ENCODE measurements at regions of chr7 and their contacts with region 1.

Region 1: GRCh38 chr7:144513334-144513733 is 109.8 kb upstream of the NOBOX start:
- DNase-seq: peak; percentile 40
- ATAC-seq: peak; percentile 89
- H3K4me3 ChIP-seq: no peak overlapping the region
- H3K27ac ChIP-seq: no peak overlapping the region
- H3K4me1 ChIP-seq: no peaks in the 10 kb centered on the region
- H3K27me3 ChIP-seq: peaks cover 7% of the 10 kb centered on the region; the same call in 1 of the 2 replicates
- CTCF ChIP-seq: peak; percentile 58; the same call in 1 of the 2 replicates

Region 2: DNA sequence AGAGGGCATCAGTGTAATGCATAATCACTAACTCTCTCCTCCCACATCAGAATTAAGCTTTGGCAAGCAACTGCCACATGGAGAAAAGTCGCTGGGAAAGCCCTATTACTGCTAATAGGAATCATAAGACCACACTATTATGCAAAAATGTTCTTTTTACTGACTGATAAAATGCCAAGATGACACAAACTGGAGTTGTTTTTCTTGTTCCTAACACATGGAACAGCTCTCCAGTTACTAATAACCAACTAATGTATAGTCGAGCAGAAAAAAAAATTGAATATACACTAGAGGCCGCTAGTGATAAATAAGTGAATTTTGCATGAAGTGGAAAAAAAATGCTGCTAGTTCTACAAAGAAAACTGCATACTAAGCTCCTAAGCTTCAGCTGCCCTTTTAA is 156.9 kb after region 1 on chr7:
- CTCF ChIA-PET with region 1: no interaction called
- POLR2A ChIA-PET with region 1: no interaction called
- intact Hi-C with region 1: loop called (anchors 1 kb)
- DNase-seq: peak; percentile 48
- ATAC-seq: peak; percentile 57
- H3K4me3 ChIP-seq: no peak overlapping the region
- H3K27ac ChIP-seq: no peak overlapping the region
- H3K4me1 ChIP-seq: no peaks in the 10 kb centered on the region
- H3K27me3 ChIP-seq: no peaks in the 10 kb centered on the region
- CTCF ChIP-seq: peak; percentile 62; the same call in 1 of the 2 replicates

Region 3: DNA sequence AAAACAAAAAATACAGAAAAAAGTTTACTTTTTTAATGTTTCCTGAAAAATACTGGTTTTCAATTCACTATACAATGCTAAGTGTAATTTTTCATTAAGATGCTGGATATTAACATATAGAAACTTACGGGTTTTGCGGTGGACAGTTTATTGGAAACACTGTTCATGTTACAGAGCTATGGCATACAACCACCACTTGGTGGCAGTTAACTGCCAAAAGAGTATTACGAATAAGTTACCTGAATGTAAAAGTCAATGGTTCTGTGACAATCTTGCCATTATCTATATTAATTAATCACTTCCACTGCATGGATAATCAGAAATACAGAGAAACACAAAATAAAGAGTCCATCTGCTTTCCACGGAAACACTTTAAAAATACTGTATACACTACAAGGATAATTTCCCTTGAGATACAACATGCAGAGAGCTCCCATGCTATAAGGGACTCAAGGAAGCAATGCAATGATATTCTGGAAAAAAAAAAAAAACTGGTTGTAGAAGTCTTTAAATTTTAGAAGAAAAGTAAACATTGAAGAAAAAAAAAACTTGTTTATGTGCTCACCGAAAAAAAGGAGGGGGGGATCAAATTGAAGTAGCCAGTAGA is 225.5 kb after region 1 on chr7:
- CTCF ChIA-PET with region 1: no interaction called
- POLR2A ChIA-PET with region 1: no interaction called
- intact Hi-C with region 1: loop called (anchors 2 kb)
- DNase-seq: peak; percentile 52
- ATAC-seq: peak; percentile 80
- H3K4me3 ChIP-seq: no peak overlapping the region
- H3K27ac ChIP-seq: no peak overlapping the region
- H3K4me1 ChIP-seq: no peaks in the 10 kb centered on the region
- H3K27me3 ChIP-seq: no peaks in the 10 kb centered on the region
- CTCF ChIP-seq: peak; percentile 75

Region 4: GRCh38 chr7:144786522-144786921 is 273.2 kb after region 1 on chr7:
- CTCF ChIA-PET with region 1: no interaction called
- POLR2A ChIA-PET with region 1: no interaction called
- intact Hi-C with region 1: loop called (anchors 1 kb)
- DNase-seq: no peak
- ATAC-seq: peak; percentile 42; the same call in 1 of the 2 replicates
- H3K4me3 ChIP-seq: no peak overlapping the region
- H3K27ac ChIP-seq: no peak overlapping the region
- H3K4me1 ChIP-seq: no peaks in the 10 kb centered on the region
- H3K27me3 ChIP-seq: no peaks in the 10 kb centered on the region
- CTCF ChIP-seq: peak; percentile 37

Region 5: DNA sequence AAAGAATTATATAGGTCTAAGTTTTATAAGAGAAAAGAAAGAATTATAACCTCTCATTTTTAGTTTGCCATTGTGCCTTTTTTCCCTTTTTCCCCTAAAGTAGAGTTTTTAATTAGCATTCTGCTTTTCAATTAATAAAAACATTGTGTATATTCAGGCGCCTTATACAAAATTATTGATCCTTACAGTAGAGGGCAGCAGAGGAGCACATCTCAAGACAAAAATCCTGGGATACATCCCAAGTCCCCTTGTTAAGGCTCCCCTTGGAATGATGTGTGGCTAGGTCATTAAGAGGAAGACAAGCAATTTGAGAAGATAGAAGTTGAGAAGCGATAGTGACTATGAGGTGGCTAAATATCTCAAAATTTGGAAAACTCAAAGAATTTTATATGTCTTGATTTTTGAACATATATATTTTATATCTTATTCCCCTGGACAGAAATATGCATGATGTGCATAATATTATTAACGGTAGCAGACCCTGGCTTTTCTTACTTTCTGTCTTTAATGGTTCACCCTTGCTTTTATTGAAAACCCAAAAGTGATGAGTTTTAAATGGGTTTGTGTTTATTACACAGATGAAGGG is 341.6 kb after region 1 on chr7:
- CTCF ChIA-PET with region 1: no interaction called
- POLR2A ChIA-PET with region 1: no interaction called
- intact Hi-C with region 1: loop called (anchors 10 kb)
- DNase-seq: peak; percentile 53
- ATAC-seq: peak; percentile 65
- H3K4me3 ChIP-seq: no peak overlapping the region
- H3K27ac ChIP-seq: no peak overlapping the region
- H3K4me1 ChIP-seq: no peaks in the 10 kb centered on the region
- H3K27me3 ChIP-seq: peaks cover 37% of the 10 kb centered on the region
- CTCF ChIP-seq: peak; percentile 70

Measured in PC-3 (cell line).